ENCODE measurements at regions of chr13 and their contacts with region 1.

Region 1: GRCh38 chr13:39942552-39943273 is 287.3 kb downstream of the COG6 start:
- DNase-seq: peak; percentile 63
- H3K4me3 ChIP-seq: peak overlapping the region in 1 of 2 experiments; percentile 33; a peak in 1 of 4 replicates
- H3K27ac ChIP-seq: no peak overlapping the region
- H3K4me1 ChIP-seq: no peaks in the 10 kb centered on the region; a peak in 1 of 4 replicates
- H3K27me3 ChIP-seq: no peaks in the 10 kb centered on the region
- CTCF ChIP-seq: peak; percentile 85
- EP300 ChIP-seq: no peak
- RAD21 ChIP-seq: peak; percentile 81

Region 2: GRCh38 chr13:39765801-39766463 is 176.8 kb before region 1 on chr13:
- CTCF ChIA-PET with region 1: interaction called, 19 read pairs
- POLR2A ChIA-PET with region 1: no interaction called
- DNase-seq: peak; percentile 42
- H3K4me3 ChIP-seq: no peak overlapping the region
- H3K27ac ChIP-seq: no peak overlapping the region
- H3K4me1 ChIP-seq: peaks cover 0 to 12% of the 10 kb centered on the region in 2 experiments; a peak in 3 of 4 replicates
- H3K27me3 ChIP-seq: no peaks in the 10 kb centered on the region
- CTCF ChIP-seq: peak; percentile 51
- EP300 ChIP-seq: no peak
- RAD21 ChIP-seq: peak; percentile 79

Region 3: GRCh38 chr13:39783050-39783449 is 159.7 kb before region 1 on chr13:
- CTCF ChIA-PET with region 1: interaction called, 28 read pairs
- POLR2A ChIA-PET with region 1: no interaction called
- DNase-seq: no peak
- H3K4me3 ChIP-seq: no peak overlapping the region
- H3K27ac ChIP-seq: no peak overlapping the region
- H3K4me1 ChIP-seq: peaks cover 4 to 20% of the 10 kb centered on the region in 2 experiments; a peak in 3 of 4 replicates
- H3K27me3 ChIP-seq: no peaks in the 10 kb centered on the region
- CTCF ChIP-seq: peak; percentile 55
- EP300 ChIP-seq: no peak
- RAD21 ChIP-seq: peak; percentile 61

Region 4: GRCh38 chr13:39892721-39893685 is 49.7 kb before region 1 on chr13:
- CTCF ChIA-PET with region 1: interaction called, 23 read pairs
- POLR2A ChIA-PET with region 1: no interaction called
- DNase-seq: peak; percentile 35
- H3K4me3 ChIP-seq: no peak overlapping the region
- H3K27ac ChIP-seq: peak overlapping the region; percentile 62 to 83
- H3K4me1 ChIP-seq: peaks cover 18 to 33% of the 10 kb centered on the region in 2 experiments
- H3K27me3 ChIP-seq: no peaks in the 10 kb centered on the region
- CTCF ChIP-seq: no peak
- EP300 ChIP-seq: peak; percentile 48 to 60
- RAD21 ChIP-seq: no peak

Region 5: GRCh38 chr13:39957868-39958677 is 15.4 kb after region 1 on chr13:
- CTCF ChIA-PET with region 1: interaction called, 38 read pairs
- POLR2A ChIA-PET with region 1: no interaction called
- DNase-seq: no peak
- H3K4me3 ChIP-seq: no peak overlapping the region
- H3K27ac ChIP-seq: no peak overlapping the region
- H3K4me1 ChIP-seq: no peaks in the 10 kb centered on the region; a peak in 1 of 4 replicates
- H3K27me3 ChIP-seq: no peaks in the 10 kb centered on the region
- CTCF ChIP-seq: no peak
- EP300 ChIP-seq: no peak
- RAD21 ChIP-seq: no peak

Region 6: DNA sequence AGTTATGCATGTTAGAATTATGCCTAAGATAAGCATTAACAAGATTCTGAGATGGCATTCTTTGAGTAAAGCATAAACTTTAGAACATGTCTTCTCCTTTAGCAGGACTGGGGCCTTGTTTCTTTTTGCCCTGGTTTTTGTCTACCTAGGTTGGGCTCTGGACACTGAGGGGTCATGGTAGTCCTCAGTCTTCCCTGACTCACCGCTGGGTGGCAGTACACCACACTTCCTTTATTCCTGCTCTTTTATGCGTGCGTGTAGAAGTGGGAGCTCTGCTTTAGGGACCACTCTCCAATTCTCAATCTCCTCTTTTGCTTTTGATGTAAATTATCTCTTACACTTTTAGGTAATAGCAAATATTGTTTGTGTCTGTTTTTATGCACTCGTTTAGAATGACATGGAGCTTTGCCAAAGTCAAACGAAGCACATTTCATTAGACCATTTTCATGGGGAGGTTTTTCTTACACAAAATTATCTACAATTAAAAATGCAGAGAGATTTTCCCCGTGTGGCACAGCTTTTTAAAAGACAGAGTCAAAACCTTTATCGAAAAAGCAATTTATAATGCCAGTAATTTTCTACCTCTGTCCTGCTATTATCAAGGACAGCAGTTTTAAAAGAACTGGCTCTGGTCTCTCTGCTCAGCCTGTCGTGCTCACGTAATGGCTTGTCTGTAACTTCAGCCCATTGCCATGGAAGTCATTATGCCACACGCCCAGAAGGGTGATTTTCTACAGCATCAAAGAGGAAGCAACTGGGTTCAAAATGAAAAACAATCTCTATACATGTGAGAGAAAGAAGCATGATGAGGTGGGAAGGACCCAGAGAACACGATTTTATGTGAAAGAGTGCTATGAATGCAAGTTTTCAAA is 126.7 kb after region 1 on chr13:
- CTCF ChIA-PET with region 1: interaction called, 16 read pairs
- POLR2A ChIA-PET with region 1: no interaction called
- DNase-seq: peak; percentile 64
- H3K4me3 ChIP-seq: no peak overlapping the region
- H3K27ac ChIP-seq: no peak overlapping the region
- H3K4me1 ChIP-seq: peaks cover 1 to 8% of the 10 kb centered on the region in 2 experiments
- H3K27me3 ChIP-seq: no peaks in the 10 kb centered on the region
- CTCF ChIP-seq: peak; percentile 79
- EP300 ChIP-seq: no peak
- RAD21 ChIP-seq: peak; percentile 85

Region 7: DNA sequence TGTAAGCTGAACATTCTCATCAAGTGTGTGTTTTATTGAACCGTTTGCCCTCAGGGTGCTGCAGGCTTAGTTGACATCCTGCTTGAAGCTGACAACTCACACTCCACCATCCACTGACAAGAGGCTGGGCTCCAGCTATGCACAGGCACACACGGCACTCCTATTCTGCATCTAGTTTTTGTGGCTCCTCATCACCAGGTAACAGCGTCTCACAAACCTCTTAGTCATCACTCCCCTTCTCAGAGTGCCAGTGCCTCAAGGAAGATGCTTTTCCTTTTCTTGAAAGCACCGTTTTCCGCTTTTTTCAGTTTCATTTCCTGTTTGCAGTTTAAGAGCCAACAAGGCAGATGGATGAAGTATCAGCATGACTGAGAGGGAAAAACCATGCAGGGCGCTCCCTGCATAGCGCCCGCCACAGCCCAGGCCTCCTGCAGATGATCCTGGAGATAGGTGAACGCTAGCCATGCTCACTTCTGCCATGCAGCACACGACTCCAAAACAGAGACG is 204.0 kb after region 1 on chr13:
- CTCF ChIA-PET with region 1: no interaction called
- POLR2A ChIA-PET with region 1: no interaction called
- DNase-seq: peak; percentile 21
- H3K4me3 ChIP-seq: no peak overlapping the region
- H3K27ac ChIP-seq: no peak overlapping the region
- H3K4me1 ChIP-seq: peaks cover 12 to 13% of the 10 kb centered on the region in 2 experiments; a peak in 3 of 4 replicates
- H3K27me3 ChIP-seq: no peaks in the 10 kb centered on the region
- CTCF ChIP-seq: no peak
- EP300 ChIP-seq: no peak
- RAD21 ChIP-seq: no peak

Measured in SK-N-SH (cell line).